ENCODE measurements at regions of chr2 and their contacts with region 1.

Region 1: DNA sequence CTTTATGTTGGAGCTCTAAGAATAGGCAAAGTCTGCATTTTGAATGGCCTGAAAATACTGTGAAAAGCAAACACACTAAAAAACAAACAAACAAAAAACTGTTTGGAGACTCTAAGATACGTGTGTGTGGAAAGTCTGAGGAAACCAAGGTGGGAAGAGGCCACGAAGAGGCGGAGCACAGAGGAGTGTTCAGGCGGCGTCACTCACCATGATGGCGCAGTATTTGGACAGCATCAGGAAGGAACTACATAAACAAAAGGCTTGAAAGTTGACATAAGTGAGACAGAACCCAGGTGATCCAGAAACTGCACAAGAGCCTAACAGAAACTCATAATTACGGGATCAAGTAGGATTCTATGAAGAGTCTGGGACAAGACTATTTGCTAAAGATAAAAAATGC is 50.8 kb upstream of the SOS1 start:
- DNase-seq: no peak
- H3K4me3 ChIP-seq: no peak overlapping the region
- H3K4me3 Mint-ChIP-seq: no peak overlapping the region
- H3K27ac ChIP-seq: no peak overlapping the region
- H3K27ac Mint-ChIP-seq: peak overlapping the region in 2 of 7 donors; percentile 46 to 50
- H3K4me1 ChIP-seq: no peaks in the 10 kb centered on the region
- H3K4me1 Mint-ChIP-seq: peaks cover 3 to 5% (median 4%) of the 10 kb centered on the region in 4 donors
- H3K27me3 ChIP-seq: no peaks in the 10 kb centered on the region
- H3K27me3 Mint-ChIP-seq: no peaks in the 10 kb centered on the region

Region 2: GRCh38 chr2:39080152-39080551 is 91.5 kb before region 1 on chr2:
- CTCF ChIA-PET with region 1: no interaction called
- POLR2A ChIA-PET with region 1: no interaction called
- intact Hi-C with region 1: no loop called
- DNase-seq: no peak
- H3K4me3 ChIP-seq: no peak overlapping the region
- H3K4me3 Mint-ChIP-seq: no peak overlapping the region
- H3K27ac ChIP-seq: no peak overlapping the region
- H3K27ac Mint-ChIP-seq: no peak overlapping the region
- H3K4me1 ChIP-seq: peaks cover 25% of the 10 kb centered on the region
- H3K4me1 Mint-ChIP-seq: peaks cover 31 to 53% (median 42%) of the 10 kb centered on the region in 4 donors
- H3K27me3 ChIP-seq: no peaks in the 10 kb centered on the region
- H3K27me3 Mint-ChIP-seq: no peaks in the 10 kb centered on the region

Region 3: DNA sequence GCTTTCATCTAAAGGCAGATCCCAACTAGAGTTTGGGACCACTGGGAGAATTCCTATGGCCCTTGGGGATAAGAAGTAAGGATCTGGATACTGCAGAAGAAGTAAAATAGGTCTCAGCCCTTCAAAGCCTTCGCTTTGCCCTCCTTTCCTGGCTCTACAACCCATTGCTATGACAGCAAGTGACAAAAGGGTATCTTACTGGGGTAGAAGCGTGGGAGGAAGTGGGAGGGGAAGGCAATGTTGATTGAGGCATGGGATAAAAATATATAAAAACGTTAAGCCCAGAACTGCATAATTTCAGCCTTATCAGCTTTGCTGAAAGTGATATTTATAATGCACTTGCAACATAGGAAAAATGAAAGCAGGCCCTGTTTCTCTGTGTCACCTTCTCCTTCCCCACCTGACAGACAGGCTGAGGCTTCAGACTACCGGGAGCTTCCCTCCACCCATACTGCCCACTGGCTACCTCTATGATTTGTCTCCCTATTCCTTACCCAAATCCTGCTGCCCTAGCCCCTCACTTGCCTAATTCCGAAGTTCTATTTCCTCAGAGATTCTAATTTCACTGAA is 35.8 kb before region 1 on chr2:
- CTCF ChIA-PET with region 1: no interaction called
- POLR2A ChIA-PET with region 1: no interaction called
- intact Hi-C with region 1: loop called (anchors 5 kb)
- DNase-seq: no peak
- H3K4me3 ChIP-seq: no peak overlapping the region
- H3K4me3 Mint-ChIP-seq: peak overlapping the region; percentile 57 to 85 (median 72)
- H3K27ac ChIP-seq: peak overlapping the region; percentile 25
- H3K27ac Mint-ChIP-seq: peak overlapping the region; percentile 73 to 96 (median 88)
- H3K4me1 ChIP-seq: peaks cover 65% of the 10 kb centered on the region
- H3K4me1 Mint-ChIP-seq: peaks cover 35 to 74% (median 54%) of the 10 kb centered on the region in 4 donors
- H3K27me3 ChIP-seq: no peaks in the 10 kb centered on the region
- H3K27me3 Mint-ChIP-seq: no peaks in the 10 kb centered on the region

Measured in CD4-positive, alpha-beta memory T cell (primary cell).